ENCODE measurements at regions of chr1 and their contacts with region 1.

Region 1: DNA sequence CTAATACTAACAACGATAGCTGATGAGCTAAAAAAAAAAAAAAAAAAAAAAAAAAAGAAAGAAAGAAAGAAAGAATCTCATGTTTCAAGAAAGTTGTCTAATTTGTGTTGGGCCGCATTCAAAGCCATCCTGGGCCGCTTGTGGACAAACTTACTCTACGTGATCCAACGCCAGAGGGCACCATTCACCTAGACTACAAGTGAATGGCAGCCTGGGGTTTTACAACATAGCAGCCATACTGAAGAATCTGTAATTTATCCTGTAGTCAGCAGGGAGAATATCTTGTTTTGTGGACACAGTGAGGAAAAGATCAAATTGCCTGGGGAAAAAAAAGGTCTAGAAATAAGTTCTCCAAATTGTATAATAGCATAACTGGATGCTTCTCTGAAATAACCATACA is 47.0 kb downstream of the CYP2J2 start:
- DNase-seq: peak; percentile 30 to 57
- ATAC-seq: peak; percentile 79 to 88 (median 80)
- H3K4me3 ChIP-seq: no peak overlapping the region
- H3K27ac ChIP-seq: no peak overlapping the region
- H3K4me1 ChIP-seq: no peaks in the 10 kb centered on the region
- H3K27me3 ChIP-seq: no peaks in the 10 kb centered on the region
- CTCF ChIP-seq: peak; percentile 54

Region 2: DNA sequence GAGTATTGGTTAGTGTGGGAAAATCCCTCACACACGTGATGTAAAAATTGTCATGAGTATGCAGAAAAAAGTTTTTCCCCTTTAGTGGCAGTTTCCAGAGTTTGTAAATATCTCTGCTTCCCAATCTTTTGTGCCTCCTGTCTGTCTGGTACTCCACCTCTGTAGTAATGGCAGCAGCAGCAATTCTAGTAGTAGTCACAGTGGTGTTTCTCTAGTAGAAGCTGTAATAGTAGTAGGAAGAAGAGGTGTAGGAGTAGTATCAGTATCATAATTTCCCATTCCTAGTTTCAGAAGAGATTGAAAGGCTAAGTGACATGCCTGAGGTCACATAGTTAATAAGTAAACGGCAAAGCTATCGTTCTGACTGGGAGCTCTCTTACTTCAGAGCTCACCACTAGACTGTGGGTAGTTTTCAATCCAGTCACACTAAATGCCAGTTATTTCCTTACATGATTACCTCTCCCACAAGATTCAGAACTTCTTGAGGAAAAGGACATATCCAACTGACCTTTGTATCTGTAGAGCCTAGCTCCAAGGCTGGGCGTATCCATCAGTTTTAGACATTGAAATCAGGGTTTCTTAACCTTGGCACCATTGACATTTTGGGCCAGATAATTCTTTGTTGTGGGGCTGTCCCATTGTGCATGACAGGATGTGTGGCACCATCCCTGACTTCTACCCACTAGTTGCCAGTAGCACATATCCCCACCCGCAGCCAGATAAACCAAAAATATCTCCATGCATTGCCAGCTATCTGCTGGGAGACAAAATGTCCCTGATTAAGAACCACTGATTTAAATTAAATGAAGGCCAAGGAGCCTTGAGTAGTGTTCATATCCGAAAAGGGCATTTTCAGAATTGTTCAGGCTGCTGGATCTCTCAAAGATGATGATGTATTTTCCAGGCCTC is 446.8 kb before region 1 on chr1:
- intact Hi-C with region 1: no loop called
- DNase-seq: no peak
- ATAC-seq: peak in 1 of 4 donors; percentile 11
- H3K4me3 ChIP-seq: no peak overlapping the region
- H3K27ac ChIP-seq: peak overlapping the region; percentile 62
- H3K4me1 ChIP-seq: peaks cover 63% of the 10 kb centered on the region
- H3K27me3 ChIP-seq: no peaks in the 10 kb centered on the region
- CTCF ChIP-seq: no peak

Region 3: DNA sequence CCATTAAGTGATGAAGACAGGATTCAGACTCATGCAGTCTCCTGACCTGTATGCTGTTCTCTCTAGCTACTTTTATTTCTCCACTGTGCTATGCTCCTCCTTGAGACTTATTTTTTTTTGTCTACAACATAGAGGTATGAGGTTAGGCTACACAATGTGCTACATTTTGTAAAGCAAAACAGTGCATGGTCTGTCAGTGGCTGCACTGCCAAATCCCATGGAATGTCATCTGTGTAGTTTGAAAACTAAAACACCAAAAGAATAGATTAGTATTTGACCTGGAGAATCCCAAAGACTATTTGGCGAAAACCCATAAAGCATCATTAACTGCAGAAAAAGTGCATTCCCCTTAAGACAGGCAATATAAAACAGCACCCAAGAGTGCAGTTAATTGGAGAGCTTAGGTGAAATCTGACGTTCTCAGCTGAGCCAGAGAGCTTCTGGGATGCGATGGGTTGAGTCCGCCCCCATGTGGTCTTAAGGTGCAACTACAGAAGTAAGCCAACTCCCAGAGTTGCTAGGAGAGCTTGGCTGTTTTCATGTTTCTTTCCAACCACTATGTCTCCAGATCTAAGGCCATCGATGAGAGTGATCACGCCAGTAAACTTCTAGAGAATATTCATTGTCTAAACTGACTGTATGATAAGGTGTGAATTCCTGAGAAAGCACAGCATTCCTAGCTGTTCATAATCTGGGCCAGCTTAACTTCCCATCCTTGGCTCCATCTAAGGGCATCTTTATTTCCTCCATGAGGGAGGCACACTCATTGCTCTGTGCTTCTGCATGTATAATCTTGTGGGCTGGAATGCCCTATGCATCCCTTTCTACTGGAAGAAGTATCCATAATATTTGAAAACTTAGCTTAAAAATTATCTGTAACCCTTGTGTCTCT is 67.7 kb after region 1 on chr1:
- intact Hi-C with region 1: loop called (anchors 2 kb)
- DNase-seq: peak in 1 of 2 donors; percentile 23
- ATAC-seq: peak; percentile 87 to 96 (median 93)
- H3K4me3 ChIP-seq: no peak overlapping the region
- H3K27ac ChIP-seq: no peak overlapping the region
- H3K4me1 ChIP-seq: no peaks in the 10 kb centered on the region
- H3K27me3 ChIP-seq: no peaks in the 10 kb centered on the region
- CTCF ChIP-seq: peak; percentile 96